Left ventricle myocardium superior (tissue), 1 donor: ENCODE measurements at regions of chr1 and their contacts with region 1.

Region 1: DNA sequence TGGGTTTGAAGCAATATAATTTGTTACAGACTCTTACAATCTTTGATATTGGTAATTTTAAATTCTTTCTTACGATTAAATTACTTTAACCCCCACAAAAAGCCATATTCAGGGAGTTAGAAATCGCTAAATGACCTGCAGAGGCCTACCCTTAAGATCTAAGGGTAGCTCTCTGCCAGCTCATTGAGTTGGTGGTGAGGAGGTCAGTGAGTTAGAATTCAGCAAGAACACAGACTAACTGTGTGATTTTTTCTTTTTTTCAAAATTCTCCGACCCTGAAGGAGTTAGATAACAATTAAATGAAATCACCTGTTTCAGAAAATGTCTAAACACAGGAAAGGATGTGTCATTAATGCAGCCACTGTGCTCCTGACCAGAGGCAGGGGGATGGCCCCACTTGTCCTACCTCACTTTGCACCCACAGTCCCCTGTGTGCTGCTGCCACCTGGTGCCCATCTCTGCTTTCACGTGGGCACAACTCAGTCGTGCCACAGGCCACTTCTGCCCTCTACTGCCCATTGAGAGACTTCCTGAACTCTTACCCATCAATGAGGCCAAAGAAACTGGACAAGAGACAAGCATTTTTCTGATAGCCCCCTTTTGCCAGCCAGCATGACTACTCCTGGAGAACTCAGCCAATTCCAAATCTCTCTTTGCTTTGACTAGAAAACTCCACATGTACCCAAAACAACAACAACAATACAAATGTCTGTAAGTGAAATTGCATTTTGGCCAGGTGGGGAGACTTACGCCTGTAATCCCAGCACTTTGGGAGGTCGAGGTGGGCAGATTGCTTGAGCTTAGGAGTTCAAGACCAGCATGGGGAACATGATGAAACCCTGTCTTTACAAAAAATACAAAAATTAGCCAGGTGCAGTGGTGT is 8.4 kb downstream of the CFAP45 start:
- DNase-seq: peak; percentile 87
- ATAC-seq: peak; percentile 90

Region 2: GRCh38 chr1:159798893-159799292 is 92.6 kb before region 1 on chr1:
- intact Hi-C with region 1: loop called (anchors 5 kb)
- DNase-seq: peak; percentile 51
- ATAC-seq: peak; percentile 96